ENCODE measurements at regions of chr17 and their contacts with region 1.

Region 1: GRCh38 chr17:44775136-44775837 is 16.5 kb downstream of the ADAM11 start:
- DNase-seq: peak; percentile 97
- ATAC-seq: peak; percentile 90 to 96 (median 94)
- H3K4me3 ChIP-seq: peak overlapping the region; percentile 37 to 71 (median 62)
- H3K27ac ChIP-seq: peak overlapping the region in 4 of 10 donors; percentile 5 to 45 (median 13)
- H3K4me1 ChIP-seq: peaks cover 4 to 34% (median 27%) of the 10 kb centered on the region in 9 donors
- H3K27me3 ChIP-seq: peaks cover 0 to 22% (median 0%) of the 10 kb centered on the region in 7 donors
- CTCF ChIP-seq: peak in 5 of 9 donors; percentile 6 to 39 (median 25)

Region 2: GRCh38 chr17:44864866-44865660 is 89.8 kb after region 1 on chr17:
- intact Hi-C with region 1: loop called (anchors 1 to 5 kb)
- DNase-seq: peak; percentile 34 to 79
- ATAC-seq: peak; percentile 60 to 87 (median 80)
- H3K4me3 ChIP-seq: no peak overlapping the region
- H3K27ac ChIP-seq: peak overlapping the region in 1 of 10 donors; percentile 18
- H3K4me1 ChIP-seq: peaks cover 0 to 20% (median 0%) of the 10 kb centered on the region in 9 donors
- H3K27me3 ChIP-seq: no peaks in the 10 kb centered on the region
- CTCF ChIP-seq: peak; percentile 71 to 91 (median 86)

Region 3: DNA sequence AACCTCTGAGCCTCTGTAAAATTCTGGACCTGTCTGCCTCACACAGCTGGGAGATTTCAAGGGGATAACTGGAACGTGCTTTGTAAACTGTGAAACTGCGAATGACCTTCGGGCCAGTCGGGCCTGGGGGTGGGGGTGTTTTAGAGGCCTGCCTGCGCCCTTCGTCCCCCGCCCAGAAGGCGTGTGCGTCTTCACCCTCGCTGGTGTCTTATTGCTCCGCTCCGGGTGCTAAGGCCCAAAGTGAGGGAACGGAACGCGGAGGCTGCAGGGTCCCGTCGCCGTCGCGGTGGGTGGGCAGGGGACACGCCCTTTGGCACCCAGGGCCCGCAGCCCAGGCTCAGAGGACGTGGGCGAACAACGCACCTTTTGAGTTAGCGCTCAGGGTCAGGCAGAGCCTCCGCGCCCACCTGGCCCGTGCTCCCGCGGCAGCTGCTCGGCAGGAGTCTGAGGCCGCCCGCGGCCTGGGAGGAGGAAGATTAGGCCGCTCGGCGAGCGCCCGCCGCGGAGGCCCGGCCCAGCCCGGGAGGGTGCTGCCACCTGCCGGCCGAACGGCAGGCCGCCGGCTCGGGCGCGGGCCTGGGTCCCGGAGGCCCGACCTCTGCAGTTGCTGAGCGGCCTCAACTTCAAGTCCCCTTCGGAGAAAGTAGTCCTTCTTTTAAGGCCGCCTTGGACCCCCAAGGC is 246.5 kb after region 1 on chr17:
- intact Hi-C with region 1: loop called in 8 of 10 experiments (anchors 2 to 10 kb)
- DNase-seq: peak; percentile 44 to 81
- ATAC-seq: peak; percentile 76 to 86 (median 80)
- H3K4me3 ChIP-seq: peak overlapping the region; percentile 4 to 61 (median 53)
- H3K27ac ChIP-seq: peak overlapping the region in 9 of 10 donors; percentile 61 to 81 (median 71)
- H3K4me1 ChIP-seq: peaks cover 13 to 46% (median 38%) of the 10 kb centered on the region in 9 donors
- H3K27me3 ChIP-seq: peaks cover 0 to 44% (median 0%) of the 10 kb centered on the region in 7 donors
- CTCF ChIP-seq: peak; percentile 77 to 99 (median 92)

Region 4: DNA sequence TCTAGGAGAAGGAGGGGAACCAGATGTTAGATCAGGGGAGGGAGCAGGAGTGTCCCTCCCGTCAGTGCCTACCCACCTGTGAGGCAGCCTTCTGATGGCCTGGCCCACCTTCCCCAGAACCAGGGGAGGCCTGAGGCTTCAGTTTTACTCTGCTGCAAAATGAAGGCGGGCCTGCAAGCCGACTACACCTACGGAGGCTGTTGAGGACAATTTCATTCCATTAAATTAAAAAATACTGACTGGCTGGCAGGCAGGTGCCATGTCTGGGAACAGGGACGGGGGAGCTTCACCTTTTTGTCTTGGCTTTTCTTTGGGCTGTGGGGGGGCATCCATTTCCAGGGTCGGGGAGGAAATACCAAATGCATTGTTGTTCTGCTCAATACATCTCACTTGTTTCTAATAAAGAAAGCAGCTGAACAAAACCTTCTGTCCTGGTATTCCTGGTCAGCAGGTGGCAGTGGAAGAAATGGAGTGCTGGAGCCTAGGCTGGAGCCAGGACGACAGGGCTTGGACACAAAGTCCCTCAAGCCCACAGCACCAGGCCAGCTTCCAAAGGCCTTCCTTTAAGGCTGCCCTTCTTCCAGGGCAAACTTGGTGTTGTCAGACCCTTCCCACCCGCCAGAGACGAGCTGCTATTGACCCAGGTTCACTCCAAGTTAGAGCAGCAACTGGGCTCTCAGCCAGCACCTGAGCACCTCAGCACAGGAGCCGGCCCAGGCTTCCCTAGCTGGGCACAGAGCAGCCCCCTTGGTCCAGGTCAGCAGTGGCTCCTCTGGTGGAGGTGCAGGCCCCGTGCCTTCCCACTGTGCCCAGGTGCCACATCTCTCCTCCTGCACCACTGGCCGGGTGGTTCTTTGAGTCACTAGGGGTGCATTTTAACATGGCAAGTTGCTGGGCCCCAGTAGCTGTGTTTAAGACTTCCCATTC is 333.6 kb after region 1 on chr17:
- intact Hi-C with region 1: loop called in 1 of 10 experiments (anchors 10 kb)
- DNase-seq: no peak
- ATAC-seq: no peak
- H3K4me3 ChIP-seq: no peak overlapping the region
- H3K27ac ChIP-seq: peak overlapping the region in 9 of 10 donors; percentile 20 to 94 (median 85)
- H3K4me1 ChIP-seq: peaks cover 9 to 87% (median 43%) of the 10 kb centered on the region in 9 donors
- H3K27me3 ChIP-seq: no peaks in the 10 kb centered on the region
- CTCF ChIP-seq: peak in 5 of 9 donors; percentile 7 to 37 (median 28)

Region 5: DNA sequence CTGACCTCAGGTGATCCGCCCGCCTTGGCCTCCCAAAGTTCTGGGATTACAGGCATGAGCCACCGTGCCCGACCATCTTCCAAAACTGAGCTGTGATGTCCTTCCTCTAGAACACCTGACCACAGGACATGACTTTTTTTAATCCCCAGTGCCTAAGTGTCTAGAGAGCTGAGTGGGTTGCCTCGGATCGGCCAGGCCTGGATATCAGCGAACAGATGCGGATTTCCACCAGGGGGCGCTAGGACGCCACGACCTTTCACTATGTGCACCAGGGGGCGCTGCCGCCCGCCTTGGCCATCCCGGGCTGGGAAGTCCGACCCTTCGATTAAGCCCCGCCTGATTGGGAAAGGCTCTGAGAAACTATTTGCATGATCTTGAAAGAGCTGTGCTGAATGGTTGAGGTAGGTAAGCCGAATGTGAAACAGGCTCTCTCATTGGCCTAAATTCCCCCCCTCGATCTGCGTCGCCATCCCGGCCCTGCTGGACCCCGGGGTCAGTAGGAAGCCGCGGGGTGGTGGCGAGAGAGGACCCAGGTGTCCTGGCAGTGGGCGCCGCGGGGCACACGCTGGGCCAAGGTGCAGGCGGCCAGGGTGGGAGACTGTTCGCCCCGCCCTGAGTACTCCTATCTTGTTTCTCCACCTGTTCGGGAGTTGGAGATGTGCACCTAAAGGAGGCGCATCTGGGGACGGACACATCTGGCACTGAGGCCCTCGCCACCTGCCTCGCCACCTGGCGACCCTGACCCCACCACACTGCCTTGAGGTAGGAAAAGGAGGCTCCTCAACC is 360.1 kb after region 1 on chr17 and contains the start of gene ACBD4:
- intact Hi-C with region 1: loop called in 3 of 10 experiments (anchors 2 to 5 kb)
- DNase-seq: peak; percentile 94 to 97
- ATAC-seq: peak; percentile 73 to 90 (median 86)
- H3K4me3 ChIP-seq: peak within 1 kb of the TSS; percentile 61 to 78 (median 70)
- H3K27ac ChIP-seq: peak within 1 kb of the TSS in 9 of 10 donors; percentile 65 to 86 (median 79)
- H3K4me1 ChIP-seq: peaks cover 13 to 41% (median 35%) of the 10 kb centered on the region in 9 donors
- H3K27me3 ChIP-seq: no peaks in the 10 kb centered on the region
- CTCF ChIP-seq: peak; percentile 100
- total RNA-seq, gene ACBD4: 6.1 to 9.7 (median 7.3) TPM